T-cell (primary cell): ENCODE measurements at regions of chr1 and their contacts with region 1.

Region 1: GRCh38 chr1:1536938-1537546 is 3.4 kb downstream of the TMEM240 start:
- DNase-seq: no peak
- ATAC-seq: no peak
- H3K4me3 ChIP-seq: no peak overlapping the region
- H3K4me3 Mint-ChIP-seq: no peak overlapping the region
- H3K27ac ChIP-seq: no peak overlapping the region
- H3K27ac Mint-ChIP-seq: no peak overlapping the region
- H3K4me1 ChIP-seq: peaks cover 0 to 20% of the 10 kb centered on the region in 2 experiments
- H3K4me1 Mint-ChIP-seq: peaks cover 0 to 5% (median 3%) of the 10 kb centered on the region in 3 donors
- H3K27me3 ChIP-seq: peaks cover 0 to 9% of the 10 kb centered on the region in 2 experiments
- H3K27me3 Mint-ChIP-seq: no peaks in the 10 kb centered on the region

Region 2: GRCh38 chr1:1406817-1407635 is 130.0 kb before region 1 on chr1 and contains the start of gene MRPL20:
- CTCF ChIA-PET with region 1: no interaction called
- POLR2A ChIA-PET with region 1: no interaction called
- DNase-seq: peak; percentile 90 to 98 (median 96)
- ATAC-seq: peak; percentile 95 to 97 (median 96)
- H3K4me3 ChIP-seq: peak within 1 kb of the TSS; percentile 76 to 85
- H3K4me3 Mint-ChIP-seq: peak within 1 kb of the TSS; percentile 89 to 95 (median 91)
- H3K27ac ChIP-seq: peak within 1 kb of the TSS; percentile 67
- H3K27ac Mint-ChIP-seq: peak within 1 kb of the TSS; percentile 93 to 97
- H3K4me1 ChIP-seq: peaks cover 11 to 40% of the 10 kb centered on the region in 2 experiments
- H3K4me1 Mint-ChIP-seq: peaks cover 33 to 52% (median 44%) of the 10 kb centered on the region in 3 donors
- H3K27me3 ChIP-seq: no peaks in the 10 kb centered on the region
- H3K27me3 Mint-ChIP-seq: no peaks in the 10 kb centered on the region
- total RNA-seq, gene MRPL20: 106 to 123 (median 114) TPM

Region 3: GRCh38 chr1:1479547-1480487 is 57.2 kb before region 1 on chr1:
- CTCF ChIA-PET with region 1: no interaction called
- POLR2A ChIA-PET with region 1: no interaction called
- DNase-seq: no peak
- ATAC-seq: peak in 1 of 4 experiments; percentile 23
- H3K4me3 ChIP-seq: no peak overlapping the region
- H3K4me3 Mint-ChIP-seq: peak overlapping the region in 1 of 3 donors; percentile 37
- H3K27ac ChIP-seq: no peak overlapping the region
- H3K27ac Mint-ChIP-seq: no peak overlapping the region
- H3K4me1 ChIP-seq: peaks cover 0 to 5% of the 10 kb centered on the region in 2 experiments
- H3K4me1 Mint-ChIP-seq: peaks cover 0 to 5% (median 3%) of the 10 kb centered on the region in 3 donors
- H3K27me3 ChIP-seq: no peaks in the 10 kb centered on the region
- H3K27me3 Mint-ChIP-seq: no peaks in the 10 kb centered on the region

Region 4: DNA sequence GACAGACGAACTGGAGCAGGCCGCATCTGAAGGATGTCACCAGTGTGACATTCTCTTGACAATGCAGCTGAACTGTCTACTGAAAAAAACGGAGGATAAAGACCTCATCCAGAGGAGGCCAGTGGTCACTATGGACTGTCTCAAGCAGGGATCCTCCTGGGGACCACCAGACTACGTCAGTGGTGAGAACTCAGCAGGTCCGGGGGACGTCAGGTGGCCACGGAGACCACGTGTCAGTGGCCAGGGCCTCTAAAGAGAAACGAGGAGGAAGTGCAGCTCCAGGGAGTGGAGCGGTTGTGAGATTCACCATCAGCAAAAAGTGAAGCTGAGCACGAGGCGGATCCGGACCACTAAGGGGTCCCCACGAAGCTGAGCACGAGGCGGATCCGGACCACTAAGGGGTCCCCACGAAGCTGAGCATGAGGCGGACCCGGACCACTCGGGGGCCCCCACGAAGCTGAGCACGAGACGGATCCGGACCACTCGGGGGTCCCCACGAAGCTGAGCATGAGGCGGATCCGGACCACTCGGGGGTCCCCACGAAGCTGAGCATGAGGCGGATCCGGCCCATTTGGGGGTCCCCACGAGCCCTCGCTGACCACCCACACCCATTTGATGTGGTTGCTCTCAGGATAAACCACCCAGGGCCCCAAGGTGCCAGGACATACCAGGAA is 16.9 kb after region 1 on chr1:
- CTCF ChIA-PET with region 1: interaction called in 1 of 2 experiments, 3 read pairs
- POLR2A ChIA-PET with region 1: interaction called in 1 of 2 experiments, 11 read pairs
- DNase-seq: no peak
- ATAC-seq: no peak
- H3K4me3 ChIP-seq: no peak overlapping the region
- H3K4me3 Mint-ChIP-seq: no peak overlapping the region
- H3K27ac ChIP-seq: no peak overlapping the region
- H3K27ac Mint-ChIP-seq: no peak overlapping the region
- H3K4me1 ChIP-seq: peaks cover 0 to 5% of the 10 kb centered on the region in 2 experiments
- H3K4me1 Mint-ChIP-seq: peaks cover 5 to 10% (median 8%) of the 10 kb centered on the region in 3 donors
- H3K27me3 ChIP-seq: no peaks in the 10 kb centered on the region
- H3K27me3 Mint-ChIP-seq: no peaks in the 10 kb centered on the region

Region 5: GRCh38 chr1:1594602-1595260 is 57.7 kb after region 1 on chr1:
- CTCF ChIA-PET with region 1: no interaction called
- POLR2A ChIA-PET with region 1: no interaction called
- DNase-seq: no peak
- ATAC-seq: no peak
- H3K4me3 ChIP-seq: no peak overlapping the region
- H3K4me3 Mint-ChIP-seq: no peak overlapping the region
- H3K27ac ChIP-seq: no peak overlapping the region
- H3K27ac Mint-ChIP-seq: no peak overlapping the region
- H3K4me1 ChIP-seq: peaks cover 0 to 14% of the 10 kb centered on the region in 2 experiments
- H3K4me1 Mint-ChIP-seq: peaks cover 7 to 10% (median 8%) of the 10 kb centered on the region in 3 donors
- H3K27me3 ChIP-seq: peaks cover 0 to 22% of the 10 kb centered on the region in 2 experiments
- H3K27me3 Mint-ChIP-seq: peaks cover 0 to 6% of the 10 kb centered on the region in 2 donors